Spleen (tissue), 13 donors: ENCODE measurements at regions of chr3 and their contacts with region 1.

Region 1: GRCh38 chr3:65230256-65231139 is 542.7 kb upstream of the ADAMTS9 start:
- DNase-seq: no peak
- H3K4me3 ChIP-seq: no peak overlapping the region
- H3K27ac ChIP-seq: no peak overlapping the region
- H3K4me1 ChIP-seq: no peaks in the 10 kb centered on the region
- H3K27me3 ChIP-seq: no peaks in the 10 kb centered on the region
- CTCF ChIP-seq: no peak
- POLR2A ChIP-seq: no peak

Region 2: DNA sequence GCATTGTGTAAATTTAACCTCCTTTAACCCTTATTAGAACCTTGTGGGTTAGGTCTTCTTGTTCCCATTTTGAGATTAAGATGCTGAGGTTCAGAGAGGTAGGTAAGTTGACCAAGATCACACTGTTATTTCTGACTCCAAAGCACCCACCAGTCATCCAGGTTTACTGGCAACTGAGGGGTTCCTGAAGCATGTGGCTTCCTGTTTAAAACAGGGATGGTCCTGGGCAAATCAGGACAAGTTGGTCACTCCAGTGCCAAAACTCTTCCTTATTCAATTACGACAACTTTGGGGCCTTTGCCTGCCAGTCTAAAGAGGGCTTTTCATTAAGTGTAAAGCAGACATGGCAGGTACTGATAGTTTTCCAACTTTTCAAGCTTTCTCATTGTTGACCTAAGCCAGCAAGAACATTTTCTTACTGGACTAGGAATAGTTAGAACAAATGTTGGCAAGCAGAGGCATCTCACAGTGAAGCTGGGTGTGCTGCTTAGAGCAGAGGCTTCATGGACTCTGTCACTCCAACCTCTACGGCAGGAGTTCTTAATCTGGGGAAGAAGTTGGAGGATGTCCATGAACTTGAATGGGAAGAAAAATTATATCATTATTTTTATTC is 393.3 kb before region 1 on chr3:
- intact Hi-C with region 1: no loop called
- DNase-seq: no peak
- H3K4me3 ChIP-seq: no peak overlapping the region
- H3K27ac ChIP-seq: no peak overlapping the region
- H3K4me1 ChIP-seq: no peaks in the 10 kb centered on the region
- H3K27me3 ChIP-seq: no peaks in the 10 kb centered on the region
- CTCF ChIP-seq: no peak
- POLR2A ChIP-seq: no peak

Region 3: GRCh38 chr3:65201926-65202325 is 28.6 kb before region 1 on chr3:
- intact Hi-C with region 1: loop called (anchors 1 kb)
- DNase-seq: no peak
- H3K4me3 ChIP-seq: no peak overlapping the region
- H3K27ac ChIP-seq: no peak overlapping the region
- H3K4me1 ChIP-seq: no peaks in the 10 kb centered on the region
- H3K27me3 ChIP-seq: no peaks in the 10 kb centered on the region
- CTCF ChIP-seq: no peak
- POLR2A ChIP-seq: no peak